H1 (cell line): ENCODE measurements at regions of chr16 and their contacts with region 1.

Region 1: GRCh38 chr16:55035029-55035428 is 104.4 kb downstream of the IRX5 start:
- DNase-seq: peak in 1 of 2 experiments; percentile 92
- H3K4me3 ChIP-seq: no peak overlapping the region
- H3K27ac ChIP-seq: no peak overlapping the region
- H3K4me1 ChIP-seq: no peaks in the 10 kb centered on the region
- H3K27me3 ChIP-seq: no peaks in the 10 kb centered on the region
- CTCF ChIP-seq: peak; percentile 64 to 81 (median 73)
- EP300 ChIP-seq: no peak
- POLR2A ChIP-seq: no peak
- RAD21 ChIP-seq: peak; percentile 67 to 75

Region 2: DNA sequence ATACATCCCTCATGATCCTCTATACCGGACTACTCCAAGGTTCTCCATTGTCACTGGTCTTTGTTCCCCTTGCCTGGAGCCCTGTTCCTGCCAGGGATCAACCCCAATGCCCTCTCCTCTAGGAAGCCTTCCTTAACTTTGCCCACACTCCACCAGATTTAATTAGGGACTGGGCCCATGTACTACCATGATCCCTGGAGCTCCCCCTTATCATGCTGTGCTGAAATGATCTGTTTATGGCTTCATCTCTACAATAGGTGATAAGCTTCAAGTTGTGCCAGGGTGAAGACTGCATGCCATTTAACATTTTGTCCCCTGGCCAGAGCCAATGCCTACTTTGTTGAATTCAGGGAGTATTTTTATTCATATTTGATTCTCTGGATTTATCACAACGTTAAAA is 122.3 kb before region 1 on chr16:
- CTCF ChIA-PET with region 1: no interaction called
- POLR2A ChIA-PET with region 1: no interaction called
- DNase-seq: no peak
- H3K4me3 ChIP-seq: no peak overlapping the region
- H3K27ac ChIP-seq: no peak overlapping the region
- H3K4me1 ChIP-seq: no peaks in the 10 kb centered on the region
- H3K27me3 ChIP-seq: no peaks in the 10 kb centered on the region
- CTCF ChIP-seq: no peak
- EP300 ChIP-seq: no peak
- POLR2A ChIP-seq: no peak
- RAD21 ChIP-seq: no peak

Region 3: GRCh38 chr16:54946909-54947308 is 88.1 kb before region 1 on chr16:
- CTCF ChIA-PET with region 1: interaction called, 11 read pairs
- POLR2A ChIA-PET with region 1: no interaction called
- DNase-seq: no peak
- H3K4me3 ChIP-seq: no peak overlapping the region
- H3K27ac ChIP-seq: no peak overlapping the region
- H3K4me1 ChIP-seq: no peaks in the 10 kb centered on the region
- H3K27me3 ChIP-seq: peaks cover 3 to 9% (median 7%) of the 10 kb centered on the region in 4 experiments; a peak in 6 of 7 replicates
- CTCF ChIP-seq: no peak
- EP300 ChIP-seq: no peak
- POLR2A ChIP-seq: no peak
- RAD21 ChIP-seq: no peak

Region 4: DNA sequence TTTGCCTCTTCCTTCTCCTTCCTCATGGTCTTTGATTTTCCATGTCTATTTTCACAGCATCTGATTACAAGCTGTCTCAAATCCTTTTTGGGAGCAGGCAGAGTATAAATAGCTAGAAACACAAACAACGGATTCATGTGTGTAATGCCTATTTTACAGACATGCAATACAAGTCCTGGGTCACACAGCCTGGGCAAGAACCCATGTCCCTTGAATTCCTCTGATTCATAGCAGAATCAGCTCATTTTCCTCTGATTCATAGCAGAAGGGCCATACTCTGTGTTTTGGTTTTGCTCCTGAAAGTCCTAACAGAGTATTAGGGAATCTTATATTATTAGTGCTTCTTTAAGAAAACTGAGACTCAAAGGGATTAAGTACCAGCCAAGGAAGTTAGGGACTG is 33.1 kb before region 1 on chr16:
- CTCF ChIA-PET with region 1: interaction called, 12 read pairs
- POLR2A ChIA-PET with region 1: no interaction called
- DNase-seq: no peak
- H3K4me3 ChIP-seq: no peak overlapping the region
- H3K27ac ChIP-seq: no peak overlapping the region
- H3K4me1 ChIP-seq: no peaks in the 10 kb centered on the region
- H3K27me3 ChIP-seq: no peaks in the 10 kb centered on the region
- CTCF ChIP-seq: no peak
- EP300 ChIP-seq: no peak
- POLR2A ChIP-seq: no peak
- RAD21 ChIP-seq: no peak

Region 5: GRCh38 chr16:55010492-55011160 is 24.4 kb before region 1 on chr16:
- CTCF ChIA-PET with region 1: interaction called, 15 read pairs
- POLR2A ChIA-PET with region 1: no interaction called
- DNase-seq: no peak
- H3K4me3 ChIP-seq: no peak overlapping the region
- H3K27ac ChIP-seq: no peak overlapping the region
- H3K4me1 ChIP-seq: no peaks in the 10 kb centered on the region
- H3K27me3 ChIP-seq: no peaks in the 10 kb centered on the region
- CTCF ChIP-seq: no peak
- EP300 ChIP-seq: no peak
- POLR2A ChIP-seq: no peak
- RAD21 ChIP-seq: no peak

Region 6: GRCh38 chr16:55021595-55022475 is 13.2 kb before region 1 on chr16:
- CTCF ChIA-PET with region 1: interaction called, 21 read pairs
- POLR2A ChIA-PET with region 1: no interaction called
- DNase-seq: peak; percentile 15 to 63
- H3K4me3 ChIP-seq: peak overlapping the region in 2 of 4 experiments; percentile 10 to 19; a peak in 1 of 8 replicates
- H3K27ac ChIP-seq: no peak overlapping the region
- H3K4me1 ChIP-seq: no peaks in the 10 kb centered on the region
- H3K27me3 ChIP-seq: no peaks in the 10 kb centered on the region; a peak in 1 of 7 replicates
- CTCF ChIP-seq: peak; percentile 25 to 62 (median 52)
- EP300 ChIP-seq: no peak
- POLR2A ChIP-seq: no peak
- RAD21 ChIP-seq: peak; percentile 37 to 56

Region 7: GRCh38 chr16:55052741-55053415 is 17.8 kb after region 1 on chr16:
- CTCF ChIA-PET with region 1: interaction called, 145 read pairs
- POLR2A ChIA-PET with region 1: no interaction called
- DNase-seq: no peak
- H3K4me3 ChIP-seq: no peak overlapping the region
- H3K27ac ChIP-seq: no peak overlapping the region
- H3K4me1 ChIP-seq: peaks cover 0 to 7% (median 3%) of the 10 kb centered on the region in 4 experiments; a peak in 5 of 7 replicates
- H3K27me3 ChIP-seq: peaks cover 12 to 25% (median 20%) of the 10 kb centered on the region in 4 experiments
- CTCF ChIP-seq: no peak
- EP300 ChIP-seq: no peak
- POLR2A ChIP-seq: no peak
- RAD21 ChIP-seq: no peak